Activated naive CD8-positive, alpha-beta T cell treated with anti-CD3 and anti-CD28 coated beads, Interleukin-2, amount 10 ng/mL, durations not matched to agents 7 days and 5 days (primary cell): ENCODE measurements at regions of chr6 and their contacts with region 1.

Region 1: GRCh38 chr6:127900935-127901334 is at the start of gene THEMIS:
- DNase-seq: peak; percentile 66
- ATAC-seq: peak; percentile 77
- H3K4me3 Mint-ChIP-seq: peak within 1 kb of the TSS; percentile 99
- H3K27ac Mint-ChIP-seq: peak within 1 kb of the TSS; percentile 95
- H3K4me1 Mint-ChIP-seq: peaks cover 39% of the 10 kb centered on the region
- H3K27me3 Mint-ChIP-seq: no peaks in the 10 kb centered on the region
- total RNA-seq, gene THEMIS: 152 to 155 TPM

Region 2: DNA sequence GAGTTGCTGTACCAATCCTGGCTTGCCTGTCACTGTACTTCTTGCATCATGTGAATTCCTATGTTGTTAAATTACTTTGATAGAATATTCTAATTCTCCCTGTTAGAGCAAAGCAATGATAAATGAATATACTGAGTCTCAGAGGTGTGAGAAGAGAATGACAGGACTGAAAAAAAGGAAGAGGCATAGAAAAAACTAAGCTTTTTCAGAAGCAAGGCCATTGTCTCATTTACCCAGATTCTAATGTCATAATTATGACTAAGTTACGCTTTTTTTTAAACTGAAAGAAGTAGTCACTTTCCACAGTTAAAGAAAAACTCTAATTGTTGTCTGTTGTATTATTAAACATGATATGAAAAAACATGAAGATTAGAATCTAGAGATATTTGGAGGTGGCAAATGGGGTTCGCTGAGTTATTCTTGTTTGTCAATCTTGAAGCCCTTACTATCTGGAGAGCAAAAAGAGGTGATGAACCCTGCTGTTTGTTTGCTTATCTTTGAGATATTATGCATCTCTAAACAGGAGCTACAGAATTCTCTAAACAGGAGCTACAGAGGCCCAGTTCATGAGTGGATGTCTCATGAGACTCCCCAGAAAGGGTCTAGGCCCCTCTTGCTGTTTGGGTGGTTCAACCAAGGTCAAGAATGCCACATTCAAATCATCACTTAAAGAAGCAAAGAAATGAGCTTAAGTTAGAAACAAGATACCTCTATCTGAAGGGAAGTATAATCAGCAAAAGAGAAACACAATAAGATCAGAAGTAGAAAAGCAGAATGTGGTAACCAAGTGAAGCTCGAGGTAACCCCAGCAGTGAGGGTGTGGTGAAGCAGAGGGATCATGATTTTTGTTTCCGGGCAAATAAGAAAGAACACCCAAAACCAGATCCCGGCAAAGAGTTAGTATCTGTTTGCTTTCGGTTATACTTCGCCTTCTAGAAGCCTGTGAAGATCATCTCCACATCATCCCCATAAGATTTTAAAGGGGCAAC is 33.2 kb after region 1 on chr6:
- POLR2A ChIA-PET with region 1: interaction called, 25 read pairs
- DNase-seq: no peak
- ATAC-seq: peak; percentile 95
- H3K4me3 Mint-ChIP-seq: peak overlapping the region; percentile 73
- H3K27ac Mint-ChIP-seq: peak overlapping the region; percentile 93
- H3K4me1 Mint-ChIP-seq: peaks cover 47% of the 10 kb centered on the region
- H3K27me3 Mint-ChIP-seq: no peaks in the 10 kb centered on the region

Region 3: DNA sequence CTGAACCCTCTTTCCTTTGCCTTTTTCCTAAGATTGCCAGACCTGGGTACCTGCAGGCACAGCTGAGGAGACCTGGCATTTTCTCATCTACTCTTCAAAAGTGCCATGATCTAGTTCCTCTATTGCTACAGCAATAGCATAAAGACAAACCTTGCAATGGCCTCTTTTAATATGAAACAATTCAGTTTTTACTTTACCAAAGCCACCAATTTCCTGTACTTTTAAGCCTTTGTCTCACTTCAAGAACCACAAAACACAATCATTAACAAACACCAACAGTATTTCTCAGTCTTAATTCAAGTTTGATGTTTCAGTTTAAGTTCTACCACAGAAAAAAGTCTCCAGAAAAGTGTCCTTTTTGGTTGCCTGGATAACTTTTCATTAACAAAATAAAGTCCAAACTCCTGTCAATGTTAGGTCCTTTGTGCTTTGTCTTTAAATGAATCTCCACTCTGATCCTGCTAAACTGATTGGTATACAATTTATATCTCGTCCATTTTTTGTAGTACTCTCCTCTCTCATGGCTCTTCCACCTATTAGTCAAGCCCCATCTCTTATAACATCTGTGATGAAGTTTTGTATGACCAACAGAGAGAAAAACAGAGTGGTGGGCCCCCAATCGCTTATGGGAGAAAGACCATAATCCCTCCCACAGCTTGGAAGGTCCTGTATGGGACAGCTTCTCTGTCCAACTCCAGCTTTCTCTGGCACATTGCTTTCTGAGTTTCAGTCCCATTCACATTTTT is 50.4 kb after region 1 on chr6:
- POLR2A ChIA-PET with region 1: interaction called, 19 read pairs
- DNase-seq: no peak
- ATAC-seq: peak; percentile 69
- H3K4me3 Mint-ChIP-seq: peak overlapping the region; percentile 67
- H3K27ac Mint-ChIP-seq: peak overlapping the region; percentile 95
- H3K4me1 Mint-ChIP-seq: peaks cover 61% of the 10 kb centered on the region
- H3K27me3 Mint-ChIP-seq: no peaks in the 10 kb centered on the region

Region 4: DNA sequence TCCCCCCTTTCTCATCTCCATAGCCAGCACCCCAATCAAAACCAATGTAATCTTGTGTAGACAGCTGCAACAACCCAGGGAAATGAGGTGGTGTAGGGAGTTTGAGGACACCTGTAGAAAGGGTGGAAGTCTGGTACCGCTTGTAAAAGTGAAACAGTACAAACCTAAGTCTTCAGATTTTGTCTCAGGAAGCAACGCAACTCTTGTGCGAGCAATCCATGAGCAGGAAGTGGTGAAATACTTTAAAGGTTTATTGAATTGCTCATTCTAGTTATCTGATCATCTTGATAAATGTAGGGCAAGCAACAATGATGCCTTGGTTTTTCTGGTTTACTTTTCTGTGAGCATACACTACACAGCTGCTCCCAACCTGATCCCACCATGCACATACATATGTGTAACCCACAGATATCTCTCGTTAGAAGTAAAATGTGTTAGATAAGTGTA is 71.0 kb after region 1 on chr6:
- POLR2A ChIA-PET with region 1: interaction called, 64 read pairs
- DNase-seq: no peak
- ATAC-seq: peak; percentile 71
- H3K4me3 Mint-ChIP-seq: peak overlapping the region; percentile 88
- H3K27ac Mint-ChIP-seq: peak overlapping the region; percentile 97
- H3K4me1 Mint-ChIP-seq: peaks cover 61% of the 10 kb centered on the region
- H3K27me3 Mint-ChIP-seq: no peaks in the 10 kb centered on the region

Region 5: GRCh38 chr6:127980996-127981395 is 80.1 kb after region 1 on chr6:
- POLR2A ChIA-PET with region 1: interaction called, 64 read pairs
- DNase-seq: no peak
- ATAC-seq: no peak
- H3K4me3 Mint-ChIP-seq: peak overlapping the region; percentile 79
- H3K27ac Mint-ChIP-seq: peak overlapping the region; percentile 66
- H3K4me1 Mint-ChIP-seq: peaks cover 67% of the 10 kb centered on the region
- H3K27me3 Mint-ChIP-seq: no peaks in the 10 kb centered on the region